H1 (cell line): ENCODE measurements at regions of chr4 and their contacts with region 1.

Region 1: GRCh38 chr4:11635359-11636072 is 206.8 kb upstream of the HS3ST1 start:
- DNase-seq: no peak
- H3K4me3 ChIP-seq: no peak overlapping the region
- H3K27ac ChIP-seq: no peak overlapping the region; the same call in 1 of the 2 replicates
- H3K4me1 ChIP-seq: peaks cover 0 to 2% (median 1%) of the 10 kb centered on the region in 4 experiments; a peak in 1 of 7 replicates
- H3K27me3 ChIP-seq: no peaks in the 10 kb centered on the region
- CTCF ChIP-seq: no peak
- EP300 ChIP-seq: no peak
- POLR2A ChIP-seq: no peak
- RAD21 ChIP-seq: no peak

Region 2: DNA sequence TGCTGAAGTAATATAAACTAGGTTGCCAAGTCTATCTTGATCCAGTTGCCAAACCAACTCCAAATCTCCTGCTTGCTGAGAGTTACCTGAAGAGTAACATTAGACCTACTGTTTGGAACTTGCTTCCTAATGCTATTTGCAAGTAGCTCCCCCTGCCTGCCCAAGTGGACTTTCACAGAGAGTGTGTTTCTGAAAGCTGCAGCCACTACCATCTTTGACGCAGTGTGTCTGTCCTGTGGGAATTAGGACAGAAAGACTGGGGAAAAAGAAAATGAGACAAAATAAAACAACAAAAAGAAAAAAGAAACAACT is 11.8 kb before region 1 on chr4:
- CTCF ChIA-PET with region 1: interaction called, 20 read pairs
- POLR2A ChIA-PET with region 1: no interaction called
- DNase-seq: no peak
- H3K4me3 ChIP-seq: no peak overlapping the region
- H3K27ac ChIP-seq: no peak overlapping the region
- H3K4me1 ChIP-seq: peaks cover 0 to 2% (median 0%) of the 10 kb centered on the region in 4 experiments; a peak in 1 of 7 replicates
- H3K27me3 ChIP-seq: no peaks in the 10 kb centered on the region
- CTCF ChIP-seq: peak; percentile 14 to 71 (median 51)
- EP300 ChIP-seq: no peak
- POLR2A ChIP-seq: no peak
- RAD21 ChIP-seq: peak; percentile 57 to 70